ENCODE measurements at regions of chr15 and their contacts with region 1.

Region 1: GRCh38 chr15:59028387-59028955 is 41.0 kb downstream of the RNF111 start:
- DNase-seq: no peak
- ATAC-seq: no peak
- H3K4me3 ChIP-seq: no peak overlapping the region
- H3K27ac ChIP-seq: no peak overlapping the region
- H3K4me1 ChIP-seq: no peaks in the 10 kb centered on the region
- H3K27me3 ChIP-seq: no peaks in the 10 kb centered on the region
- CTCF ChIP-seq: no peak
- POLR2A ChIP-seq: no peak
- RAD21 ChIP-seq: no peak

Region 2: GRCh38 chr15:59063042-59063441 is 34.6 kb after region 1 on chr15:
- CTCF ChIA-PET with region 1: no interaction called
- POLR2A ChIA-PET with region 1: no interaction called
- dilution Hi-C with region 1: no loop called
- in situ Hi-C with region 1: no loop called
- intact Hi-C with region 1: no loop called
- DNase-seq: no peak
- ATAC-seq: no peak
- H3K4me3 ChIP-seq: no peak overlapping the region
- H3K27ac ChIP-seq: no peak overlapping the region
- H3K4me1 ChIP-seq: no peaks in the 10 kb centered on the region
- H3K27me3 ChIP-seq: no peaks in the 10 kb centered on the region
- CTCF ChIP-seq: no peak
- POLR2A ChIP-seq: no peak
- RAD21 ChIP-seq: no peak

Region 3: GRCh38 chr15:59169251-59169708 is 140.8 kb after region 1 on chr15:
- CTCF ChIA-PET with region 1: no interaction called
- POLR2A ChIA-PET with region 1: no interaction called
- dilution Hi-C with region 1: no loop called
- in situ Hi-C with region 1: no loop called
- intact Hi-C with region 1: loop called (anchors 5 kb)
- DNase-seq: peak; percentile 86
- ATAC-seq: peak; percentile 47
- H3K4me3 ChIP-seq: no peak overlapping the region
- H3K27ac ChIP-seq: no peak overlapping the region
- H3K4me1 ChIP-seq: peaks cover 29% of the 10 kb centered on the region
- H3K27me3 ChIP-seq: no peaks in the 10 kb centered on the region
- CTCF ChIP-seq: no peak
- POLR2A ChIP-seq: no peak
- RAD21 ChIP-seq: no peak